PC-3 (cell line): ENCODE measurements at regions of chr1 and their contacts with region 1.

Region 1: GRCh38 chr1:52662645-52663313 is 29.8 kb downstream of the SHISAL2A start:
- DNase-seq: peak; percentile 98
- ATAC-seq: peak; percentile 97
- H3K4me3 ChIP-seq: no peak overlapping the region; the same call in 1 of the 2 replicates
- H3K27ac ChIP-seq: peak overlapping the region; percentile 68
- H3K4me1 ChIP-seq: peaks cover 32% of the 10 kb centered on the region
- H3K27me3 ChIP-seq: no peaks in the 10 kb centered on the region
- CTCF ChIP-seq: no peak

Region 2: DNA sequence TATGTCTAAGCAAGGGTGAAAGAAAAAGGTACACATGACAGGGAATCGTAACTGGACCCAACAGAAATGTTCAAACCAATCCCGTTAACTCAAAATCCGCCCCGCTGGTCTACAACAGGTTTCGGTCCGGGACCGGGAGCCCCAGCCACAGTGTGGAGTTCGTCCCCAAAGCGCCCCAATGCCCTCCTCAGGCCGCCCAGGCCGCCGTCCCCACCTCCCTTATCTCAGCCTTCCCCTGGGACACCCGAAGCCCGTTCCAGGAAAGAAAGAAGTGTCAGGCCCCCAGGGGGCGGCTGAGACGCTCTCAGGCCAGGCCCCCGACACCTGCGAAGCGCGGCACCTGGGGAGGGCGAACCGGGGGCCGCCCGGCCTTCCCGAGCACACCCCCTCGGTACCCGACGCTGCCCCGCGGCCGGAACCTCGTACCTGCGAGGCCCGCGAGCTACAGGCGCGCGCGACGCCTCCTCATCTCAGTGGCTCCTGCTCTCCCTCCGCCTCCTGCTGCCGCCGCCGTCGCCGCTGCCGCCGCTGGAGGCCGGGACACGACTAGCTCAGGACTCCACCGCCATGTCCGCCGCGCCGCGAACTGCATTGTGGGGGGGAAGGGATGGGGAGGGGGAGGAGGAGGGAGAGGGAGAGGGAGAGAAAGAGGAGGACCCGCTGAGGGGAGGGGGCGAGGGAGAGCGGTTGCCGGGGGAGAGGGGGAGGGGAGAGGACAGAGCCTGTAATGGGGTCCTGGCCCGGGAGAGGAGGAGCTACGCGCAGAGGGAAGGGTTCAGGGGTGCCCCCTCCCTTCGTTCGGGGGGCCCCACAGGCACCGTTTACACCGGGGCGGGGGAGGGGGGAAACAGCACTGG is 110.0 kb before region 1 on chr1 and contains the start of gene TUT4:
- CTCF ChIA-PET with region 1: no interaction called
- POLR2A ChIA-PET with region 1: no interaction called
- intact Hi-C with region 1: loop called (anchors 1 kb)
- DNase-seq: peak; percentile 66
- ATAC-seq: peak; percentile 58
- H3K4me3 ChIP-seq: peak within 1 kb of the TSS; percentile 82
- H3K27ac ChIP-seq: peak within 1 kb of the TSS; percentile 48
- H3K4me1 ChIP-seq: peaks cover 11% of the 10 kb centered on the region
- H3K27me3 ChIP-seq: no peaks in the 10 kb centered on the region
- CTCF ChIP-seq: peak; percentile 12; the same call in 1 of the 2 replicates
- total RNA-seq, gene TUT4: 36.1 and 37.4 TPM in 2 replicates

Region 3: GRCh38 chr1:52691821-52692220 is 29.0 kb after region 1 on chr1:
- CTCF ChIA-PET with region 1: interaction called, 12 read pairs
- POLR2A ChIA-PET with region 1: no interaction called
- intact Hi-C with region 1: no loop called
- DNase-seq: no peak
- ATAC-seq: no peak
- H3K4me3 ChIP-seq: no peak overlapping the region
- H3K27ac ChIP-seq: no peak overlapping the region
- H3K4me1 ChIP-seq: no peaks in the 10 kb centered on the region
- H3K27me3 ChIP-seq: no peaks in the 10 kb centered on the region
- CTCF ChIP-seq: no peak

Region 4: DNA sequence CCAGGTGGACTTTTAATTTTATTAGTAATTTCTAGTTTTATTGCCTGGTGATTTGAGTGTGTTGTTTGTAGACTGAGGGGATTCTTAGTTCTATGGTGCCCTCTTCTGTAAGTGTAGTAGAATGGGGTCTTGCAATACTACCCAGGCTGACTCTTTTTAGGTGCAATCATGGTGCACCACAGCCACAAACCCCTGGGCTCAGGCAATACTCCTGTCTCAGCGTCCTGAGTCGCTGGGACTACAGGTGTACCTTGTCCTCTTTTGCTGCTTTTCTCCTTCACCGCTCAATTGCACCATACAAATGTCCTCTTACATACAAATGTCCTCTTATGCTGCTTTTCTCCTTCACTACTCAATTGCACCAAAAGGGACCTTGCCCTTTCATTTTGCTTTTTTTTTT is 307.4 kb after region 1 on chr1:
- CTCF ChIA-PET with region 1: no interaction called
- POLR2A ChIA-PET with region 1: no interaction called
- intact Hi-C with region 1: no loop called
- DNase-seq: no peak
- ATAC-seq: no peak; the same call in 1 of the 2 replicates
- H3K4me3 ChIP-seq: no peak overlapping the region
- H3K27ac ChIP-seq: no peak overlapping the region
- H3K4me1 ChIP-seq: no peaks in the 10 kb centered on the region
- H3K27me3 ChIP-seq: no peaks in the 10 kb centered on the region
- CTCF ChIP-seq: 0 out of 2 replicates have a peak, but pooled peaks have one; percentile 23